Breast epithelium (tissue), 4 donors: ENCODE measurements at regions of chr2 and their contacts with region 1.

Region 1: DNA sequence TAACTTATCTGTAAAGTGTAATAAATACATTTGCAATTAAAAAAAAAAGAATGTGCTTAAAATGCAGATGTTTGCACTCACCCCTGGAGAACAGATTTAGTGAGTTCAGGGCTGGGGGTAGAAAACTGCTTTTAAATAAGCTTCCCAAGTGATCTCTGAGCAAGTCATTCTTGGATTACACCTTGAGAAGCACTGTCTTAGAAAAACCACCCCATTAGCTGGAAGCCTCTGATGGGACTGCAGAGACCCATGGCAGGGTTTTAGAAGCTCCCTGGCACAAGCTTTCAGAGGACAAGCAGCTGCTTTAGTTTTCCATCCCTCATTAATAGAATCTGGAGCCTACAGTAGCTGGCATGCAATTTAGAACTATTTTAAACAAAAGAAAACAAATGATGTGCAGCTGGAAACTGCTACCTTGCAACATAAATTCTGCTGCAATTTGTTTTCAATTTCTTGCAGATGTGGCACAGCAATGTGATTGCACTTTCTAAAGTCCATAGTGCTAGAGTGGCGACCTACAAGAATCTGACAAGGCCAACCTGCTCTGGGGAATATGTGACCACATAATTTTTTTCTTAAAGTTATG is 141.5 kb downstream of the CDC42EP3 start:
- DNase-seq: no peak
- H3K4me3 ChIP-seq: no peak overlapping the region
- H3K27ac ChIP-seq: no peak overlapping the region
- H3K4me1 ChIP-seq: no peaks in the 10 kb centered on the region
- H3K27me3 ChIP-seq: no peaks in the 10 kb centered on the region
- CTCF ChIP-seq: no peak
- POLR2A ChIP-seq: no peak

Region 2: DNA sequence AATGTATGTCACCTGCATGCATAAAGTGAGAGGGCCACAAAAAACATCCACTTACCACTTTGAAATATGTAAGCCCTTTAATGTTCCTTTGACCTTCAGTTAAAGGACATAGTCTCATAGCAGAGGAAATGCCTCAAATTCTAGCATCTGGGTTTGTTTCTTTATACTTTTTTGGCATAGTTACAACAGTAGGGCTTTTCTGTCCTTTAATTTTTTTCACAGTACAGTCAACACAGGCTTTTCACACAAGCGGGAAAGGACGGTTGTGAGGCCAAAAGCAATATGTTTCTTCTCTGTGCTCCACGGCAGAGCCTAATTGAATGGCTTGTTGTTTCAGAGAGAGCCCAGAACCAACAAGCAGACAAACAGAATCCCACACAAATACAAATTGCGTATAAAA is 1116.7 kb before region 1 on chr2:
- intact Hi-C with region 1: loop called (anchors 10 kb)
- DNase-seq: no peak
- H3K4me3 ChIP-seq: no peak overlapping the region
- H3K27ac ChIP-seq: peak overlapping the region; percentile 5 to 45
- H3K4me1 ChIP-seq: peaks cover 7 to 33% of the 10 kb centered on the region in 2 donors
- H3K27me3 ChIP-seq: no peaks in the 10 kb centered on the region
- CTCF ChIP-seq: no peak
- POLR2A ChIP-seq: no peak

Region 3: GRCh38 chr2:37558623-37559022 is 28.7 kb after region 1 on chr2:
- intact Hi-C with region 1: no loop called
- DNase-seq: no peak
- H3K4me3 ChIP-seq: no peak overlapping the region
- H3K27ac ChIP-seq: no peak overlapping the region
- H3K4me1 ChIP-seq: peaks cover 0 to 3% of the 10 kb centered on the region in 2 donors
- H3K27me3 ChIP-seq: no peaks in the 10 kb centered on the region
- CTCF ChIP-seq: no peak
- POLR2A ChIP-seq: no peak

Region 4: GRCh38 chr2:37819186-37819585 is 289.3 kb after region 1 on chr2:
- intact Hi-C with region 1: no loop called
- DNase-seq: no peak
- H3K4me3 ChIP-seq: no peak overlapping the region
- H3K27ac ChIP-seq: no peak overlapping the region
- H3K4me1 ChIP-seq: no peaks in the 10 kb centered on the region
- H3K27me3 ChIP-seq: no peaks in the 10 kb centered on the region
- CTCF ChIP-seq: no peak
- POLR2A ChIP-seq: no peak

Region 5: DNA sequence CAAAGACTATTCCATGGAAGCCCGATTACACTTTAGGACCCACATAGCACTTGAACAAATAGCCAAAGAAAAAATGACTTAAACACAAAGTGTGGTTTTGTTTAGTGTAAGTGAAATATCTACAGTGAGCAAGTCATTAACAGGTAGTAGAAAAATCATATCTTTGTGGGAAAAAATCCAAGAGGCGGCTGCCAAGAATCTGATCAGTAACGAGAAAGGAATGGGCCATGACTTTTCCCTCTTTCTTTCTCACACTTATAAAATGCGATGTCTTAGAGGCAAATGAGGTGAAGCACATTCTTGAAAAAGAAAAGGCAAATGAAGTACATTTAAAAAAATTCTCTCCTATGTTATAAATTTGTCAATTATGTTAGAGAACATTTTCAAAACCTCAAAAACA is 1235.2 kb after region 1 on chr2:
- intact Hi-C with region 1: no loop called
- DNase-seq: no peak
- H3K4me3 ChIP-seq: no peak overlapping the region
- H3K27ac ChIP-seq: no peak overlapping the region
- H3K4me1 ChIP-seq: no peaks in the 10 kb centered on the region
- H3K27me3 ChIP-seq: no peaks in the 10 kb centered on the region
- CTCF ChIP-seq: no peak
- POLR2A ChIP-seq: no peak